ENCODE measurements at regions of chr2 and their contacts with region 1.

Region 1: GRCh38 chr2:68925295-68925896 is 27.3 kb downstream of the GKN2 start:
- DNase-seq: peak in 6 of 7 donors; percentile 37 to 74 (median 54)
- H3K4me3 ChIP-seq: no peak overlapping the region
- H3K27ac ChIP-seq: no peak overlapping the region
- H3K4me1 ChIP-seq: no peaks in the 10 kb centered on the region
- H3K27me3 ChIP-seq: no peaks in the 10 kb centered on the region
- CTCF ChIP-seq: peak; percentile 92 to 98 (median 94)
- POLR2A ChIP-seq: no peak

Region 2: DNA sequence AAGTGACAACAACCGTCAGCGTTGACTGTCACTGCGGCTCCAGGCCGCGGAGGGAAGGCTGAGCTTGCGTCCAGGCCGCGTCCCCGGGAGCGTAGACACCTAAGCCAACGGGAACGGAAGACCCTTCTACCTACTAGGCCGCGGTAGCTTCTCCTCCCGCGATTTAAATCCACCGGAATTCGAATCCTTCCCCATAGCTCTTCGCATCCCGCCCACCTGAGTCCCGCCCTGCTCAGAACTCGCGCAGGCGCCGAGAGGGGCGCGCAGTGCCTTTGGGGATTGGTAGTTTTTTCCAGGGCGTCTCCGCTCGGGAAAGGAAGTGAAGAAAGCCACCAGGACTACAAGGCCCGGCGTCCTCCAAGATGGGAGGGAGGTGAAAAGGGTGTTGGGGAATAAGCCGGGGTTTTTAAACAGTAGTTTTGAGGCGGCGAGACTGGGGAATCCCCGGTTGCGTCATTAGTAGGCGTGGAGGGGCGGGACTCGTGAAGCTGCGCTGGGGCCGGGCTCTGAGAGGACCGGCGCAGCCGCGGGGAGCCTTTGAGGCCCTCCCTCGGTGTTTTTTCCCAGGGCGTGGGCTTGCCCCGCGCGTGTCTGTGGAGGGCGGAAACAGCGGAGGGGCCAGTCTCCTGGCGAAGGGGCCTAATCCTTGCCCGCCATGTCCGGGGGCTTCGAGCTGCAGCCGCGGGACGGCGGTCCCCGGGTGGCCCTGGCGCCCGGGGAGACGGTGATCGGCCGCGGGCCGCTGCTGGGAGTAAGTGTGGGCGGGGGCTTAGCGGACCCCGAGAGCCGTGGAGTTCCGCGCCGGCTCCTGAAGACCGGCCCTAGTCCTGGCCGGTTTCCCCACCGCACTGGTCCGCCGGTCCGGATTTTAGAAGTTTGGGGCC is 458.1 kb before region 1 on chr2 and contains the starts of genes APLF and FBXO48:
- intact Hi-C with region 1: loop called in 1 of 2 experiments (anchors 10 kb)
- DNase-seq: peak; percentile 97 to 99 (median 98)
- H3K4me3 ChIP-seq: peak within 1 kb of the TSS; percentile 63 to 92 (median 88)
- H3K27ac ChIP-seq: peak within 1 kb of the TSS in 4 of 5 donors; percentile 64 to 86 (median 78)
- H3K4me1 ChIP-seq: peaks cover 6 to 21% of the 10 kb centered on the region in 2 donors
- H3K27me3 ChIP-seq: no peaks in the 10 kb centered on the region
- CTCF ChIP-seq: no peak
- POLR2A ChIP-seq: peak; percentile 50 to 72
- total RNA-seq, gene APLF: 3.0 to 6.8 (median 3.9) TPM
- total RNA-seq, gene FBXO48: 0.42 to 2.7 (median 1.2) TPM

Region 3: GRCh38 chr2:68487773-68488355 is 437.5 kb before region 1 on chr2:
- intact Hi-C with region 1: loop called in 1 of 2 experiments (anchors 10 kb)
- DNase-seq: no peak
- H3K4me3 ChIP-seq: no peak overlapping the region
- H3K27ac ChIP-seq: no peak overlapping the region
- H3K4me1 ChIP-seq: peaks cover 0 to 10% of the 10 kb centered on the region in 2 donors
- H3K27me3 ChIP-seq: no peaks in the 10 kb centered on the region
- CTCF ChIP-seq: peak; percentile 27 to 70 (median 52)
- POLR2A ChIP-seq: no peak

Region 4: DNA sequence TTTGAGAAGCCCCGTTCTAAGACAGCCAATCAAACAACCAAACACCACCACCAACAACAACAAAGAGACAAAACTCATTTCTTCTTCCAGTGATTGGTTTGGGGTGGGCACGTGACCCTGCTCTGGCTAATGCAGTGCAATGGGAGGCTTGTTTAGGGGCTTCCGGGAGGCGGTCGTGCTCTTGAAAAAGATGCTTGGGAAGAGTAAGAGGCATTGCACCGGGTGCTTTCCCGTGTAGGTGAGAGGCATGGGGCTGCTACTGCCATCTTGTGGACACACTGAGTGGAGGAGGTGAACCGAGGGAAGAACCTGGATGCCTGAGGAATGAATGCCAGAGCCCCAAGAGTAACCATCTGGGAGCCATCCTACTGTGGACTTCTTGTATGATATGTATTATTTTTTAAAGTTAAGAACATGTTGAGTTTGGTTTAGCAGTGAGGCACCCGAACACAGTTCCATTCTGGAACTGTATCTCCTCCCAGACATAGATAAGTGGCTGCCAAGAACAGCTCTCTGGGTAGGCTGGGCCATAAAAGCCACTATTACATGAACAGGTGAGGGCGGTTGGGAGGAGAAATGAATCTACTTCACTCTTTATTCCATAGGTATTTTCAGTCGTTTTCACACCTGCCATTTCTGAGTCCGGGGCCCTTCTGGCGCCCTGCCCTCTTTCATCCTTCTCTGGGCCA is 209.9 kb before region 1 on chr2:
- intact Hi-C with region 1: loop called in 1 of 2 experiments (anchors 5 kb)
- DNase-seq: peak; percentile 58 to 86 (median 72)
- H3K4me3 ChIP-seq: no peak overlapping the region
- H3K27ac ChIP-seq: peak overlapping the region in 3 of 5 donors; percentile 10 to 44 (median 11)
- H3K4me1 ChIP-seq: peaks cover 0 to 7% of the 10 kb centered on the region in 2 donors
- H3K27me3 ChIP-seq: no peaks in the 10 kb centered on the region
- CTCF ChIP-seq: peak; percentile 43 to 74 (median 58)
- POLR2A ChIP-seq: no peak

Region 5: DNA sequence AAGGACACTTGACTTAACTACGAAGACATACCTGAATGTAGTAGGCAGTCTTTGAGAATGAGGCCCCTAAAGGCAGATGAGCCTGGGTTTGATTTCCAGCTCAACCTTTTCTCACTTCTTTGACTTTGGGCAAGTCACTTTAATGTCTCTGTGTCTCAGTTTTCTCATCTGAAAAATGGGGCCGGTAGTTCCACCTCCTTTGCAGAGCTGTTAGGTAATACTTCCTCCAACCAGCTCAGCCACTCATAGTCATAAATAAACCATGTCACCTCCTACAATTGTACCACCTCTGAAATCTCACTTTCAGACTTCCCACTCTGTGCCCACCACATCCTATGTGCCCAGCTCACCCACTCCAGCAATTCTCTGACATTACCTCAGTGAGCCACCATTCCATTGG is 180.4 kb before region 1 on chr2:
- intact Hi-C with region 1: loop called (anchors 5 kb)
- DNase-seq: no peak
- H3K4me3 ChIP-seq: no peak overlapping the region
- H3K27ac ChIP-seq: no peak overlapping the region
- H3K4me1 ChIP-seq: peaks cover 4 to 20% of the 10 kb centered on the region in 2 donors
- H3K27me3 ChIP-seq: no peaks in the 10 kb centered on the region
- CTCF ChIP-seq: no peak
- POLR2A ChIP-seq: no peak

Region 6: GRCh38 chr2:68751397-68752339 is 173.7 kb before region 1 on chr2:
- intact Hi-C with region 1: loop called (anchors 5 kb)
- DNase-seq: peak; percentile 86 to 97 (median 93)
- H3K4me3 ChIP-seq: no peak overlapping the region
- H3K27ac ChIP-seq: no peak overlapping the region
- H3K4me1 ChIP-seq: peaks cover 0 to 12% of the 10 kb centered on the region in 2 donors
- H3K27me3 ChIP-seq: no peaks in the 10 kb centered on the region
- CTCF ChIP-seq: peak; percentile 83 to 95 (median 91)
- POLR2A ChIP-seq: no peak

Region 7: GRCh38 chr2:68819556-68819955 is 105.8 kb before region 1 on chr2:
- intact Hi-C with region 1: no loop called
- DNase-seq: no peak
- H3K4me3 ChIP-seq: no peak overlapping the region
- H3K27ac ChIP-seq: no peak overlapping the region
- H3K4me1 ChIP-seq: peaks cover 5% of the 10 kb centered on the region in 2 donors
- H3K27me3 ChIP-seq: no peaks in the 10 kb centered on the region
- CTCF ChIP-seq: no peak
- POLR2A ChIP-seq: no peak

Region 8: GRCh38 chr2:68849579-68850030 is 75.8 kb before region 1 on chr2:
- intact Hi-C with region 1: no loop called
- DNase-seq: no peak
- H3K4me3 ChIP-seq: no peak overlapping the region
- H3K27ac ChIP-seq: no peak overlapping the region
- H3K4me1 ChIP-seq: no peaks in the 10 kb centered on the region
- H3K27me3 ChIP-seq: peaks cover 8% of the 10 kb centered on the region
- CTCF ChIP-seq: no peak
- POLR2A ChIP-seq: no peak